Heart right ventricle (tissue), 16 donors: ENCODE measurements at regions of chr2 and their contacts with region 1.

Region 1: DNA sequence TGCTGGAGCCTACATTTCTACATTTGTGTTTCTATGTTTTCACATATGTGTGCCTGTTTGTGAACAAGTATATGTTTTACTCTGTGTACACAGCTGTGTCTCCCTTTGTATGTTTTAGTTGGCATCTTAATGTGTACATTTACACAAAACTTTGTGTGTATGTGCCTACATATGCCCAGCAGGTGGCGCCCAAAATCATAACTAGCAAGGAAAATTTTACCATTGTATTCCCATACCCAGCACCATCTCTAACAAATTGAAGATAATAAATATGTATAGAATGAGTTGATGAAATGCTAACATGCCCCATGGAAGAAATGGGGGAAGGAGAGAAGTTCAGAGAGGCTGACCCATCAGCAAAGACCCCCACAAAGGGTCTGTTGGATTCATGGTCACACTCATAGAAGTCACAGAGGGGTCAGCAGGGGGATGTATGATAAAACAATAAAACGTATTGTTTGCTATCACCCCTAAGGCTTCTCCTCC is 48.1 kb downstream of the PKDCC start:
- DNase-seq: peak; percentile 64 to 74
- ATAC-seq: peak in 7 of 8 donors; percentile 36 to 59 (median 53)
- H3K4me3 ChIP-seq: no peak overlapping the region
- H3K27ac ChIP-seq: peak overlapping the region in 1 of 10 donors; percentile 38
- H3K4me1 ChIP-seq: peaks cover 2 to 62% (median 15%) of the 10 kb centered on the region in 9 donors
- H3K27me3 ChIP-seq: no peaks in the 10 kb centered on the region
- CTCF ChIP-seq: peak; percentile 75 to 90 (median 82)

Region 2: GRCh38 chr2:42196403-42197267 is 100.7 kb after region 1 on chr2:
- intact Hi-C with region 1: loop called in 9 of 10 experiments (anchors 1 to 10 kb)
- DNase-seq: peak in 1 of 2 donors; percentile 61
- ATAC-seq: peak; percentile 50 to 91 (median 80)
- H3K4me3 ChIP-seq: peak overlapping the region in 3 of 10 donors; percentile 12 to 23 (median 13)
- H3K27ac ChIP-seq: peak overlapping the region in 4 of 10 donors; percentile 29 to 57 (median 41)
- H3K4me1 ChIP-seq: peaks cover 0 to 66% (median 20%) of the 10 kb centered on the region in 9 donors
- H3K27me3 ChIP-seq: no peaks in the 10 kb centered on the region
- CTCF ChIP-seq: peak; percentile 19 to 79 (median 61)

Region 3: DNA sequence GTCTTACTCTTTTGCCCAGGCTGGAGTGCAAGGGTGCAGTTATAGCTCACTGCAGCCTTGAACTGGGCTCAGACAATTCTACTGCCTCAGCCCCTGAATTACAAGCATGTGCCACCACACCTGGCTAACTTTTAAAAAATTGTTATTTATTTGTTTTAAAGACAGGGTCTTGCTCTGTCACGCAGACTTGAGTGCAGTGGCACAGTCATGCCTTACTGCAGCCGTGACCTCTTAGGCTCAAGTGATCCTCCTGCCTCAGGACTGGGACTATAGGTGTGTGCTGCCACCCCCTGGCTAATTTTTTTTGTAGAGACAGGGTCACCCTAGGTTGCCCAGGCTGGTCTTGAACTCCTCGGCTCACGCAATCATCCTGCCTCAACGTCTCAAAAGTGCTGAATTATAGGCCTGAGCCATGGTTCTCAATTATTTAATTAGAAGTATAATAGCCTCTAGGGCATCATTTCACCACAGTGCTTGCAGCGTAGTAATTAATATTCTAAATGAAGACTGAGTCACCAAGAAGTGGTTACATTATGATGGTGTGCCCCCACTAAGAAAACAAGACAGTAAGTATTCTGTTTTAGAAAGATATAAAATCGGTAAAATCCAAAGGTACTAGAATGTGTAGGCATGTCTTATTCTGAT is 142.8 kb after region 1 on chr2:
- intact Hi-C with region 1: loop called (anchors 1 to 5 kb)
- DNase-seq: peak in 1 of 2 donors; percentile 23
- ATAC-seq: peak; percentile 71 to 89 (median 86)
- H3K4me3 ChIP-seq: no peak overlapping the region
- H3K27ac ChIP-seq: no peak overlapping the region
- H3K4me1 ChIP-seq: peaks cover 0 to 35% (median 7%) of the 10 kb centered on the region in 9 donors
- H3K27me3 ChIP-seq: no peaks in the 10 kb centered on the region
- CTCF ChIP-seq: peak; percentile 30 to 64 (median 49)

Region 4: GRCh38 chr2:42244520-42244919 is 148.6 kb after region 1 on chr2:
- intact Hi-C with region 1: loop called in 8 of 10 experiments (anchors 2 to 5 kb)
- DNase-seq: no peak
- ATAC-seq: no peak
- H3K4me3 ChIP-seq: no peak overlapping the region
- H3K27ac ChIP-seq: no peak overlapping the region
- H3K4me1 ChIP-seq: peaks cover 0 to 39% (median 17%) of the 10 kb centered on the region in 9 donors
- H3K27me3 ChIP-seq: no peaks in the 10 kb centered on the region
- CTCF ChIP-seq: no peak

Region 5: GRCh38 chr2:42328148-42328833 is 232.3 kb after region 1 on chr2:
- intact Hi-C with region 1: loop called (anchors 1 to 10 kb)
- DNase-seq: no peak
- ATAC-seq: no peak
- H3K4me3 ChIP-seq: no peak overlapping the region
- H3K27ac ChIP-seq: no peak overlapping the region
- H3K4me1 ChIP-seq: no peaks in the 10 kb centered on the region
- H3K27me3 ChIP-seq: no peaks in the 10 kb centered on the region
- CTCF ChIP-seq: peak in 8 of 9 donors; percentile 19 to 57 (median 50)

Region 6: GRCh38 chr2:42339191-42339912 is 243.4 kb after region 1 on chr2:
- intact Hi-C with region 1: loop called in 3 of 10 experiments (anchors 5 to 10 kb)
- DNase-seq: no peak
- ATAC-seq: peak in 1 of 8 donors; percentile 14
- H3K4me3 ChIP-seq: no peak overlapping the region
- H3K27ac ChIP-seq: no peak overlapping the region
- H3K4me1 ChIP-seq: peaks cover 0 to 25% (median 17%) of the 10 kb centered on the region in 9 donors
- H3K27me3 ChIP-seq: no peaks in the 10 kb centered on the region
- CTCF ChIP-seq: no peak

Region 7: GRCh38 chr2:42360890-42361727 is 265.1 kb after region 1 on chr2 and contains the start of gene COX7A2L:
- intact Hi-C with region 1: loop called in 7 of 10 experiments (anchors 2 to 10 kb)
- DNase-seq: peak; percentile 97
- ATAC-seq: peak; percentile 99 to 100 (median 100)
- H3K4me3 ChIP-seq: peak within 1 kb of the TSS; percentile 66 to 100 (median 89)
- H3K27ac ChIP-seq: peak within 1 kb of the TSS; percentile 83 to 99 (median 96)
- H3K4me1 ChIP-seq: peaks cover 10 to 38% (median 30%) of the 10 kb centered on the region in 9 donors
- H3K27me3 ChIP-seq: peaks cover 0 to 2% (median 0%) of the 10 kb centered on the region in 7 donors
- CTCF ChIP-seq: peak in 5 of 9 donors; percentile 26 to 65 (median 56)
- total RNA-seq, gene COX7A2L: 93.9 to 141 (median 107) TPM